ENCODE measurements at regions of chr11 and their contacts with region 1.

Region 1: DNA sequence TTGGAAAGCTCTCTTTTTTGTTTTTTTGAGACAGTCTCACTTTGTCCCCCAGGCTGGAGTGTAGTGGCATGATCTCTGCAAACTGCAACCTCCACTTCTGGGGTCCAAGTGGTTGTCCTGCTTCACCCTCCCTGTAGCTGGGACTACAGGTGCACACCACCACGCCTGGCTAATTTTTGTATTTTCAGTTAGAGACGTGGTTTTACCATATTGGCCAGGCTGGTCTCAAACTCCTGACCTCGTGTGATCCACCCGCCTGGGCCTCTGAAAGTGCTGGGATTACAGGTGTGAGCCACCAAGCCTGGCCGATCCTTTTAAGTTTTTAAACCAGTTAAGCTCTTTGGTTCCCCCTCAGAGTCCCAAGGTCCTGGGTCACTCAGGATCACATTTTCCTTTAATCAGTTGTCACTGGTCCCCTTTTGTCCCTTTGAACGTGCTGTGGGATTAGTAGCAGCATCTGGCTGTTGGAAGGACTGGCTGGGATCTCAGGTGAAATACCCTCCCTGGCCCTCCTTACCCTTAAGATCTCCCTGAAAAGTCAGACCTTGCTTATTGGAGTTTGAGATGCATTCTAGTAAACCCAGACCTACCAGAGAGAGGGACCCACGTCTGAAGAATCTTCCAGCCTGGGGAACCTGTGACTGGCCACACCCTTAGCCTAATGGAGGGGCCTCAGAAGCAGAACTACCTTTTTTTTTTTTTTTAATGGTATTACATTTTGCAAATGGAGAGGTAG is 8.1 kb downstream of the MALAT1 start:
- DNase-seq: no peak
- ATAC-seq: peak; percentile 49
- H3K4me3 Mint-ChIP-seq: no peak overlapping the region
- H3K27ac Mint-ChIP-seq: peak overlapping the region; percentile 92
- H3K4me1 Mint-ChIP-seq: peaks cover 55% of the 10 kb centered on the region
- H3K27me3 Mint-ChIP-seq: no peaks in the 10 kb centered on the region
- CTCF ChIP-seq: no peak

Region 2: GRCh38 chr11:65378221-65378907 is 128.6 kb before region 1 on chr11:
- CTCF ChIA-PET with region 1: interaction called, 14 read pairs
- POLR2A ChIA-PET with region 1: interaction called, 4 read pairs
- DNase-seq: no peak
- ATAC-seq: no peak
- H3K4me3 Mint-ChIP-seq: no peak overlapping the region
- H3K27ac Mint-ChIP-seq: no peak overlapping the region
- H3K4me1 Mint-ChIP-seq: peaks cover 15% of the 10 kb centered on the region
- H3K27me3 Mint-ChIP-seq: no peaks in the 10 kb centered on the region; the same call in 1 of the 2 replicates
- CTCF ChIP-seq: no peak

Region 3: DNA sequence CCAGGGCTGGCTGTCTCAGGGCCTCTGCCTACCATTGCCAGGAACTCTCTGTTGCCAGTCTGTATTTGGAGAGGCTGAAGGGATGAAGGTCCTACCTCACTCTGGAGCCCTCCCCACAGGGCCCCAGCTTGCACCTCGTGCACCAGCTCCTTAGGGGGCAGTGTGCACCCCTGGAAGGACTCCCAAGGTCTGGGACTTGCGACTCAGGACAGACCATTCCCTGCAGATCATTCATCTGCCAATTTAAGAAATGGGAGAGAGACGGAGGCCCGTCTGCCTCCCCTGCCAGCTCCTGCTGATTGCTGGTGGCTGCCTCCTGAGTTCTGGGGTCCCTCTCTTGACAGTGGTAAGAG is 35.6 kb before region 1 on chr11:
- CTCF ChIA-PET with region 1: interaction called, 84 read pairs
- POLR2A ChIA-PET with region 1: interaction called, 248 read pairs
- DNase-seq: peak; percentile 69
- ATAC-seq: peak; percentile 87
- H3K4me3 Mint-ChIP-seq: no peak overlapping the region
- H3K27ac Mint-ChIP-seq: no peak overlapping the region
- H3K4me1 Mint-ChIP-seq: peaks cover 2% of the 10 kb centered on the region
- H3K27me3 Mint-ChIP-seq: peaks cover 11% of the 10 kb centered on the region
- CTCF ChIP-seq: 0 out of 2 replicates have a peak, but pooled peaks have one; percentile 16

Region 4: GRCh38 chr11:65477149-65477965 is 29.6 kb before region 1 on chr11:
- CTCF ChIA-PET with region 1: interaction called, 84 read pairs
- POLR2A ChIA-PET with region 1: interaction called, 248 read pairs
- DNase-seq: peak; percentile 87
- ATAC-seq: peak; percentile 80
- H3K4me3 Mint-ChIP-seq: peak overlapping the region; percentile 79
- H3K27ac Mint-ChIP-seq: peak overlapping the region; percentile 99
- H3K4me1 Mint-ChIP-seq: peaks cover 34% of the 10 kb centered on the region
- H3K27me3 Mint-ChIP-seq: no peaks in the 10 kb centered on the region; the same call in 1 of the 2 replicates
- CTCF ChIP-seq: no peak

Region 5: GRCh38 chr11:65487413-65488272 is 19.3 kb before region 1 on chr11:
- CTCF ChIA-PET with region 1: interaction called, 39 read pairs
- POLR2A ChIA-PET with region 1: interaction called, 502 read pairs
- DNase-seq: peak; percentile 96
- ATAC-seq: peak; percentile 86
- H3K4me3 Mint-ChIP-seq: peak overlapping the region; percentile 62
- H3K27ac Mint-ChIP-seq: peak overlapping the region; percentile 100
- H3K4me1 Mint-ChIP-seq: peaks cover 82% of the 10 kb centered on the region
- H3K27me3 Mint-ChIP-seq: peaks cover 4% of the 10 kb centered on the region
- CTCF ChIP-seq: no peak

Measured in WTC11 (cell line).